ENCODE measurements at regions of chr12 and their contacts with region 1.

Region 1: GRCh38 chr12:24373004-24373403 is 423.5 kb upstream of the SOX5 start:
- DNase-seq: no peak
- ATAC-seq: no peak
- H3K4me3 ChIP-seq: no peak overlapping the region
- H3K4me3 Mint-ChIP-seq: no peak overlapping the region
- H3K27ac ChIP-seq: no peak overlapping the region
- H3K27ac Mint-ChIP-seq: no peak overlapping the region
- H3K4me1 ChIP-seq: no peaks in the 10 kb centered on the region
- H3K4me1 Mint-ChIP-seq: no peaks in the 10 kb centered on the region
- H3K27me3 ChIP-seq: no peaks in the 10 kb centered on the region
- H3K27me3 Mint-ChIP-seq: no peaks in the 10 kb centered on the region

Region 2: GRCh38 chr12:24359418-24359817 is 13.6 kb before region 1 on chr12:
- CTCF ChIA-PET with region 1: no interaction called
- POLR2A ChIA-PET with region 1: interaction called in 1 of 2 experiments, 13 read pairs
- DNase-seq: no peak
- ATAC-seq: no peak
- H3K4me3 ChIP-seq: no peak overlapping the region
- H3K4me3 Mint-ChIP-seq: no peak overlapping the region
- H3K27ac ChIP-seq: no peak overlapping the region
- H3K27ac Mint-ChIP-seq: no peak overlapping the region
- H3K4me1 ChIP-seq: no peaks in the 10 kb centered on the region
- H3K4me1 Mint-ChIP-seq: no peaks in the 10 kb centered on the region
- H3K27me3 ChIP-seq: no peaks in the 10 kb centered on the region
- H3K27me3 Mint-ChIP-seq: no peaks in the 10 kb centered on the region

Measured in T-cell (primary cell).